ENCODE measurements at regions of chr10 and their contacts with region 1.

Region 1: GRCh38 chr10:69092959-69093850 is 5.3 kb downstream of the SRGN start:
- DNase-seq: peak; percentile 56 to 92 (median 85)
- ATAC-seq: peak; percentile 30 to 47
- H3K4me3 Mint-ChIP-seq: peak overlapping the region in 7 of 10 donors; percentile 0 to 76 (median 29)
- H3K27ac Mint-ChIP-seq: peak overlapping the region; percentile 5 to 94 (median 68)
- H3K4me1 Mint-ChIP-seq: peaks cover 18 to 77% (median 49%) of the 10 kb centered on the region in 4 donors
- H3K27me3 Mint-ChIP-seq: no peaks in the 10 kb centered on the region

Region 2: GRCh38 chr10:68752711-68753350 is 340.4 kb before region 1 on chr10:
- POLR2A ChIA-PET with region 1: no interaction called
- DNase-seq: no peak
- ATAC-seq: no peak
- H3K4me3 Mint-ChIP-seq: no peak overlapping the region
- H3K27ac Mint-ChIP-seq: peak overlapping the region in 3 of 10 donors; percentile 18 to 73 (median 72)
- H3K4me1 Mint-ChIP-seq: no peaks in the 10 kb centered on the region
- H3K27me3 Mint-ChIP-seq: no peaks in the 10 kb centered on the region

Region 3: DNA sequence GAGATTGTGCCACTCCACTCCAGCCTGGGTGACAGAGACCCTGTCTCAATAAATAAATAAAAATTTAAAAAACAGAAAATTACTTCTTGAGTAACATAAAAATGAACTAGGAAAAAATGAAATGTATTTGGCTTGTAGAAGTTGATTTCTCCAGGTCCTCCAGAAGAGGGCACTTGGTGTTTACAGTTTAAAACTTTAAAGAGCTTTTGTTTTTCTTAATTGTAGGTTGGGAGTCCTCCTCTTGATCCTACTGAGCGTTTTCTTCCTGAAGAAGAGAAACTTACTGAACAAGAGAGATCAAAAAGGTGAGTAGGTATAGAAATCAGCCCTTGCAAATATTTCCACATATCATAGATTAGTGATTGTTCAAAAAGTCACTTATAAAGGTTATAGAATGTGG is 88.4 kb before region 1 on chr10:
- POLR2A ChIA-PET with region 1: interaction called, 10 read pairs
- DNase-seq: peak in 4 of 10 donors; percentile 6 to 68 (median 64)
- ATAC-seq: peak; percentile 58 to 69
- H3K4me3 Mint-ChIP-seq: no peak overlapping the region
- H3K27ac Mint-ChIP-seq: peak overlapping the region in 3 of 10 donors; percentile 50 to 68 (median 63)
- H3K4me1 Mint-ChIP-seq: peaks cover 0 to 6% (median 2%) of the 10 kb centered on the region in 4 donors
- H3K27me3 Mint-ChIP-seq: no peaks in the 10 kb centered on the region

Region 4: GRCh38 chr10:69237528-69238159 is 144.4 kb after region 1 on chr10:
- POLR2A ChIA-PET with region 1: no interaction called
- DNase-seq: peak; percentile 69 to 91 (median 84)
- ATAC-seq: peak; percentile 91 to 94
- H3K4me3 Mint-ChIP-seq: peak overlapping the region in 1 of 10 donors; percentile 4
- H3K27ac Mint-ChIP-seq: peak overlapping the region in 3 of 10 donors; percentile 3 to 57 (median 41)
- H3K4me1 Mint-ChIP-seq: peaks cover 7 to 29% (median 13%) of the 10 kb centered on the region in 4 donors
- H3K27me3 Mint-ChIP-seq: no peaks in the 10 kb centered on the region

Measured in naive thymus-derived CD8-positive, alpha-beta T cell (primary cell).